ENCODE measurements at regions of chr4 and their contacts with region 1.

Region 1: DNA sequence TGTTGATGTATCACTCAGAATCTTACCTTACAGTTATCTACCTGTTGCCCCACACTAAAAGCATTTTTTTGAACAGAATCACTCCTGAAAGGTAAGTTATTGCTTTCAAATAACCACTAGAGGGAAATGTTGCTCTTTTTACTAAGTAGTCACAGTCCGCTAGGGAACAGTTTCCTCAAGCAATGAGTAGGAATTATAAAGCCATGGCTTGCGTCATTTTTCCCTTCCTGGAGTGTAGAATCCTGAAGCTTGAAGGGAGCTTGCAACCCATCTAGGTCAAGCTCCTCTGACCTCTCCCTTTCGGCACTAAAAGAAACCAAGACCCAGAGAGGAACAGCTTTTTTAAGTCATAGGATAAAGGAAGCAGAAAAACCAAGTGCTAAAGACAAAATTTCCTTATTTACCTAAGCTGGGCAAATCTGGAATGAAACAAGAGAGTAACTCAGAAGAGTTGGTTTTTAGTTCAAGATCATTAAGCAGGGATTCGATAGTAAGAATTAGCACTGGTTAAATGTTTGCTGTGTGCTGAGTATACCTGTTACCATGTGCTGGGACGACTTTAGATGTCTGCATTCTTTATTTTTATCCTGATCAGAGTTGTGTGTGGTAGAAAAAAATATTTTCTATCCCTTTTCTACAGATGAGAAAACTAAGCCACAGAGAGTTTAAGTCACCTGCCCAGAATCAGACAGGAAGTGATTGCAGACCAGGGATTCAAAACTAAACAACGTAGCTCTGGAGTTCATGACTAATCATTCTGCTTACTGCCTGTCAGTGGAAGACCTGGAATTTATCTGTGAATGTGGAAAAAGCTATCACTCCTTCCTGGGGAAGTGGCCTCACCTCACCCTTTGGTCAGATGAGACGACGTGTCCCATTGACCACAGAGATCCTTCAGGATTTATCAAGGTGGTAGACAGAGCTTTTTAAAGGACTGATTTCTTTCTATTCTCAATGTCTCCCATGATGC is 631.5 kb downstream of the RAB28 start:
- DNase-seq: peak in 1 of 5 donors; percentile 7
- ATAC-seq: peak in 3 of 4 donors; percentile 62 to 85 (median 82)
- H3K4me3 ChIP-seq: no peak overlapping the region
- H3K27ac ChIP-seq: no peak overlapping the region
- H3K4me1 ChIP-seq: peaks cover 0 to 4% (median 0%) of the 10 kb centered on the region in 12 donors
- H3K27me3 ChIP-seq: peaks cover 0 to 43% (median 3%) of the 10 kb centered on the region in 9 donors
- CTCF ChIP-seq: peak; percentile 42 to 74 (median 57)
- POLR2A ChIP-seq: no peak

Region 2: GRCh38 chr4:12409507-12410190 is 443.0 kb before region 1 on chr4:
- intact Hi-C with region 1: no loop called
- DNase-seq: no peak
- ATAC-seq: peak in 3 of 4 donors; percentile 32 to 76 (median 57)
- H3K4me3 ChIP-seq: no peak overlapping the region
- H3K27ac ChIP-seq: no peak overlapping the region
- H3K4me1 ChIP-seq: peaks cover 0 to 11% (median 0%) of the 10 kb centered on the region in 12 donors
- H3K27me3 ChIP-seq: no peaks in the 10 kb centered on the region
- CTCF ChIP-seq: peak in 1 of 12 donors; percentile 12
- POLR2A ChIP-seq: no peak

Region 3: DNA sequence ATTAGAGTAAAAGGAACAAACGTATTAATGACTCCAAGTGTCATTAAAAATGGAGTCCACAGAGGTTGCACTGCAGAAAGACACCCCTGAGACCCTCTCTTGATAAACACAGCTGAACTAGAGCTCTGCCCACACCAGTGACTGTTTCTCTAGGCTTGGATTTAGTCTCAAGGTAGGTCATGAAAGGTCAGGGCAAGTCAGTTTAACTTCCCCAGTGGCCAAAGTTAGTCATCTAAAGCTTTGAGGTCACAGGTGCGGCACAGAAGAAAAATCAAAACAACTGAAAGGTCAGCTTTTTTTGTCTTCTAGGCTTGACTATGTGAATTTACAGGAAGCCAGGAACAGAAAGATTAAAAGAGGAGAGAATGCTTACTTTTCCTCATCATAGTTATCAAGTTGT is 118.0 kb before region 1 on chr4:
- intact Hi-C with region 1: loop called in 1 of 10 experiments (anchors 10 kb)
- DNase-seq: no peak
- ATAC-seq: no peak
- H3K4me3 ChIP-seq: no peak overlapping the region
- H3K27ac ChIP-seq: no peak overlapping the region
- H3K4me1 ChIP-seq: no peaks in the 10 kb centered on the region
- H3K27me3 ChIP-seq: peaks cover 0 to 4% (median 0%) of the 10 kb centered on the region in 9 donors
- CTCF ChIP-seq: no peak
- POLR2A ChIP-seq: no peak

Region 4: DNA sequence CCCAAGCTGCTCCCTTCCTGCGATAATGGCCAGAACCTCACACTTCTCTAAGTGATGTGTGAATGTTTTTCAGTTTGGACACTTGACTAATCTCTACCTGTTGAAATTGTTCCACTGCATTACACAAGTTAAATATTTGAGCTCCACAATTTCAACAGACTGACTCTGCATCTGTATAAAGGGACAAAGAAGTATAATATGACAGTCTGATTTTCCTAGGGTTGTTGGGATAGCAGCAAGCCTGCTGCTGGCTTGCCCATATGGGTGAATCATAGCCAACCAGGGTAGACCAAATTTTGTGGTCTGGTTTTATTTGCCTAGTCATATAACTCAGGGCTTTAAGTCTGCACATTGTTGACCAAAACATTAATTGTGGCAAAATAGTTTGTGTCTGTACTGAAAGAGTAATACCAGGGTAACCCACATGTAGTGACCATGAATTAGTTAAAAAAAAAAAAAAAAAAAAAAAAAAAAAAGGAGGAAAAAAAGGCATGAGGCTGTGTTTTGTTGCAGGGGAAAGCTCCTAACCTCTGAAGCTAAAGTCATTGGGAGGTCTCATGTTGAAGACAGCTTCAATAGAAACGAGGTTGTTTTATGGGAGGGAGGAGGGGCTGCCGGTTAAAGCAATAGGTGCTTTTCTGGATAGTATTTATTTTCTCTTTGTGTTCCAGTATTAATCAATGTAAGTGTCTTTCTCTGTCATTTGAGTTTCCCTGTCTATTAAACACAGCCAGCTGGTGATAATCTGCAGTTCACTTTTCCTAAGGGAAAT is 97.3 kb after region 1 on chr4:
- intact Hi-C with region 1: no loop called
- DNase-seq: no peak
- ATAC-seq: no peak
- H3K4me3 ChIP-seq: no peak overlapping the region
- H3K27ac ChIP-seq: no peak overlapping the region
- H3K4me1 ChIP-seq: no peaks in the 10 kb centered on the region
- H3K27me3 ChIP-seq: no peaks in the 10 kb centered on the region
- CTCF ChIP-seq: no peak
- POLR2A ChIP-seq: no peak

Region 5: DNA sequence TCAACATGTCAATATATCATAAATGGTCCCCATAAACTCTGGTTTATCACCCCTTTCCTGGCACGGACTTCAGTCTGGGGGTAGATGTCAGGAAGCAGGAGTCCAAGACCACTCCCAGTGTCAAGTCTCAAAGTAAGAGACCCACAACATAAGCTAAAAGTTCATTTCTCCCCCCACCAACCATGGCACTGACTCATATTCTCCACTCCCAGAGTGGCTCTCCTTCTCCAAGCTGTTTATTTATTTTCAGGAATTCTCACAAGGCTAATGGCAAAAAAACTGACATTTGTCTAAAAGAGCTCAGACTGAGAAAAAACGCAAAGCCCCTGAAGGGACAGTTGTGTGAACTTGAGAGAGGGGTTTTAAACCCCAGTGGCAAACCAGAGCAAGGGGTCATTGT is 414.5 kb after region 1 on chr4:
- intact Hi-C with region 1: no loop called
- DNase-seq: no peak
- ATAC-seq: no peak
- H3K4me3 ChIP-seq: no peak overlapping the region
- H3K27ac ChIP-seq: no peak overlapping the region
- H3K4me1 ChIP-seq: no peaks in the 10 kb centered on the region
- H3K27me3 ChIP-seq: no peaks in the 10 kb centered on the region
- CTCF ChIP-seq: no peak
- POLR2A ChIP-seq: no peak

Region 6: GRCh38 chr4:13541720-13542576 is 689.3 kb after region 1 on chr4:
- intact Hi-C with region 1: loop called in 2 of 10 experiments (anchors 2 kb)
- DNase-seq: peak in 1 of 5 donors; percentile 29
- ATAC-seq: peak in 3 of 4 donors; percentile 8 to 35 (median 30)
- H3K4me3 ChIP-seq: peak overlapping the region in 10 of 12 donors; percentile 0 to 30 (median 17)
- H3K27ac ChIP-seq: peak overlapping the region in 1 of 12 donors; percentile 93
- H3K4me1 ChIP-seq: peaks cover 0 to 59% (median 38%) of the 10 kb centered on the region in 12 donors
- H3K27me3 ChIP-seq: peaks cover 91 to 100% (median 100%) of the 10 kb centered on the region in 9 donors
- CTCF ChIP-seq: peak in 11 of 12 donors; percentile 13 to 52 (median 33)
- POLR2A ChIP-seq: no peak